ENCODE measurements at regions of chr7 and their contacts with region 1.

Region 1: GRCh38 chr7:133997463-133997862 is 129.7 kb upstream of the LRGUK start:
- DNase-seq: no peak
- H3K4me3 Mint-ChIP-seq: no peak overlapping the region
- H3K27ac Mint-ChIP-seq: no peak overlapping the region
- H3K4me1 Mint-ChIP-seq: no peaks in the 10 kb centered on the region
- H3K27me3 Mint-ChIP-seq: no peaks in the 10 kb centered on the region
- CTCF ChIP-seq: no peak

Region 2: DNA sequence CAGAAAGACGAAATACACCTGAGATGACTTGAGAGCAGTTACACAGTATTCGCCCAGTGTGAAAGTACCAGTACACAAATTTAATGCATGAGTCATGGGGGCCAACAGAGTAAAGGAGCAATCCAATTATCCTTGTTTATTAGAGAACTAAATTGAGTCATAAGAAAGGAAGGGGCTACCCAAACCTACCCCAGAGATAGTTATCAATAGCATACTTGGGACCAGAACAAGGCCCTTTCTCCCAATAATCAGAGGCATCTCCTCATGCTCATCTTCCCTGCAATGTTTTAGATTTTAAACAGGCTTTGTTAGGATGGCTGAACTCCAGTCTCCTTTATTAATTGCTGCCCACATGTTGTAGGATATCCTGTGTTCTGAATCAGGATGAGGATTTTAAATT is 110.0 kb before region 1 on chr7:
- CTCF ChIA-PET with region 1: no interaction called
- intact Hi-C with region 1: loop called (anchors 10 kb)
- DNase-seq: no peak
- H3K4me3 Mint-ChIP-seq: peak overlapping the region; percentile 32
- H3K27ac Mint-ChIP-seq: peak overlapping the region; percentile 11
- H3K4me1 Mint-ChIP-seq: peaks cover 34% of the 10 kb centered on the region
- H3K27me3 Mint-ChIP-seq: no peaks in the 10 kb centered on the region
- CTCF ChIP-seq: no peak

Measured in Calu3 (cell line).